Activated T-helper 1 cell treated with anti-CD3 and anti-CD28 coated beads, Interleukin-12 subunit alpha, Interleukin-12 subunit beta, Interleukin-2, Interleukin-4 antibody, amounts not matched to agents 30 ng/mL and 10 ng/mL and 1 ng/mL, durations not matched to agents 14 hours and 24 hours and 36 hours (primary cell): ENCODE measurements at regions of chr11 and their contacts with region 1.

Region 1: DNA sequence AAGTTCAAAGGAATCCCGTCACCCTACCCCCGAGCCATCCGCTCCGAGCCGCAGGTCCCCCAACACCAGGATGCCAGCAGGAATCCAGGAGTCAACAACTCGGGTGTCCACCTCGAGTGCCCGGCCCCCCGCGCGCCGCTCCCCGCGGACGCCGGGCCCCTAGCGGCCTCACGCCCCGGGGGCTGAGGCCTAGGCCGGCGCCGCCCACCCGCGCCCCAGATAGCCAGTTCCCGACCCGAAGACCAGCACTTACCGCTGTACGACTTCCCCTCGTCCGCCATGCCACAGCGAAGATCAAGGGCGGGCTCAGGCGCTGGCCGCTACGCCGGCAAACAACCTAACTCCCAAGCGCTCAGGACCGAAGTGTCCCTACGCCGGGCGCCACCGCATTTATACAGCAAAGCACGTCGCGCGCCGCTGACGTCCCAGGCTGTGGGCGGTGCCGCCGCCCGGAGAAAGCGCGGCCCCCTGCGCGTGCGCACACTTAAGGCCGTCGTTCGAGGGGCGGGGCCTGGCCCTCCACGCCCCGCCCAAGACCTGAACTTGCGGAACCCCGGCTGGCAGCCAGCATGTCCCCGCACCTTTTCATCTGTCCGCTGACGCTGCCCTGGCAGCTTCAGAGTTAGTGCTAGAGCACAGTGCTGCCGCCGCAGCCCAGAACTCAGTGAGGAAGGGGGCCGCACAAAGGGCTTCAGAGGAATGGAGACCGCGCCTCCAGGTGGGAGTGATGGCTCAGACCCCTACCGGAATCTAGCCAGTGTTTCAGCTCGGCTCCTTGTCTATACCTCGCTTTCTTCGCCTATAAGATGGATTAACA is at the start of gene NXF1:
- DNase-seq: peak; percentile 95
- H3K4me3 Mint-ChIP-seq: peak within 1 kb of the TSS; percentile 100
- H3K27ac Mint-ChIP-seq: peak within 1 kb of the TSS; percentile 99
- H3K4me1 Mint-ChIP-seq: peaks cover 40% of the 10 kb centered on the region
- H3K27me3 Mint-ChIP-seq: peaks cover 2% of the 10 kb centered on the region
- total RNA-seq, gene NXF1: 155 and 158 TPM in 2 replicates

Region 2: GRCh38 chr11:62787005-62787759 is 18.1 kb before region 1 on chr11 and contains the start of gene TMEM179B:
- intact Hi-C with region 1: loop called (anchors 1 kb)
- DNase-seq: peak; percentile 96
- H3K4me3 Mint-ChIP-seq: peak within 1 kb of the TSS; percentile 95
- H3K27ac Mint-ChIP-seq: peak within 1 kb of the TSS; percentile 94
- H3K4me1 Mint-ChIP-seq: peaks cover 42% of the 10 kb centered on the region
- H3K27me3 Mint-ChIP-seq: no peaks in the 10 kb centered on the region
- total RNA-seq, gene TMEM179B: 40.6 and 43.0 TPM in 2 replicates

Region 3: DNA sequence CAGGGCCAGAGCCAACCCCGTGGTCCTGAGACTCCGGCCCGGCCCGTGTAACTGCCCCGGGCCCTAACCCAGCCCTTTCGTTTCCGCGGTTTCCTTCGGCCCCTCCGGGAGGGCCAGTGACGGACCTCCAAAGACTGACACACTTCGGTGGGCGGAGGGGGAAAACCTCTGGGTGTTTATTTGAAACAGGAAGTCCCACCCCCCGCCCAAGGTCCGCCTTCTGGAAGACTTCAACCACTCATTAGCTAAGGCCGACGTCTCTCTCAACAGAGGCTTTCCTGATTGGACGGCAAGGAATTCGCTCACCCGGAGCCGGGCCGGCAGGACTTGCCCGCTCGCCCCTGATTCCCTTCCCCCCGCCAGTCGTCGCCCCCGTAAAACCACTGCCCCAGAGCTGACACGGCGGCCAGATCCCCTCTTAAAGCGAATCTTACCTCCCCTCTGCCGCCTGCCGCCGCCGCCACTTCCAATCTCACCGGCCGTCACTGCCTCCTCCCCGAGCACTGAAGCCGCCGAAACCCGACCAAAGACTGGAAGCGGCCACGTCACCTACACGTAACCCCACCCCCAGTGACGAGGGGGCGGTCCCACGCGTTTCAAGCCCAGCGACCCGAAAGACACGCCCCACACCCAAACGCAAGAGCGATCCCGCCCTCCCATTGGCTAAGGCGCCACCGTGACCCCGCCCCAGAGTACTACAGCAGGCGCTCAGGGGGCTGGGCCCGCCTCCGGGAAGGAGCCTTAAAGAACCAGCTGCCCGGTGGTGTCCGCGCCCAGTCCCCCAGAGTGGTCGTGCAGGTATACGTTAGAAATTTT is 26.4 kb after region 1 on chr11 and contains the start of gene STX5:
- intact Hi-C with region 1: loop called (anchors 1 kb)
- DNase-seq: peak; percentile 99
- H3K4me3 Mint-ChIP-seq: peak within 1 kb of the TSS; percentile 93
- H3K27ac Mint-ChIP-seq: peak within 1 kb of the TSS; percentile 99
- H3K4me1 Mint-ChIP-seq: peaks cover 41% of the 10 kb centered on the region
- H3K27me3 Mint-ChIP-seq: no peaks in the 10 kb centered on the region
- total RNA-seq, gene STX5: 34.2 and 39.9 TPM in 2 replicates